ENCODE measurements at regions of chr1 and their contacts with region 1.

Region 1: GRCh38 chr1:214213136-214213535 is 67.8 kb upstream of the SMYD2 start:
- DNase-seq: no peak
- ATAC-seq: no peak
- H3K4me3 ChIP-seq: no peak overlapping the region
- H3K27ac ChIP-seq: no peak overlapping the region
- H3K4me1 ChIP-seq: peaks cover 0 to 12% (median 6%) of the 10 kb centered on the region in 12 donors
- H3K27me3 ChIP-seq: no peaks in the 10 kb centered on the region
- CTCF ChIP-seq: no peak
- POLR2A ChIP-seq: no peak

Region 2: DNA sequence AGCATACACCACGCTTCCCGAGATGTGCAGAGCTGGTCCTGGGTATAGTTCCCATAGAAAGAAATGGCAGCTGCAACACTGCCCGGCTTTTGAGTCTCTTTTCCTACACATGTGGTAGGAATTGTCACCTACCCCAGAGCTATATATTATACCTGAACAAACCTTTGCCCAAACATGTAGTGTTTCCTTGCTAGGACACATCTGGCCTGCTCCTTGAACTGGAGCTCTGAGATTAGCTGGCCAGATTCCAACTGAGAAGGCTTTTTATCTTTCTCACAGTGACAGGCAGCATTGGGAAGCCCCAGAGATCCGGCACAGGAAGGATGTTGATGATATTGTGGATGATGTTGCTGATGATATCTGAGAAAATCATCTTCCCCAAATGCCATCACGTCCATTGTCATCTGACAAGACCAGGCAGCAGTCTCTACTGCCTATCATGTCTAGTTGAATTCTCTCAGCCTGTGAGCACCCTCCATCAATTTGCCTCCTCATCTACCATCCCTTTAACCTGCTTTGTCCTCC is 47.2 kb before region 1 on chr1:
- intact Hi-C with region 1: no loop called
- DNase-seq: no peak
- ATAC-seq: no peak
- H3K4me3 ChIP-seq: no peak overlapping the region
- H3K27ac ChIP-seq: no peak overlapping the region
- H3K4me1 ChIP-seq: no peaks in the 10 kb centered on the region
- H3K27me3 ChIP-seq: peaks cover 0 to 13% (median 0%) of the 10 kb centered on the region in 9 donors
- CTCF ChIP-seq: no peak
- POLR2A ChIP-seq: no peak

Region 3: DNA sequence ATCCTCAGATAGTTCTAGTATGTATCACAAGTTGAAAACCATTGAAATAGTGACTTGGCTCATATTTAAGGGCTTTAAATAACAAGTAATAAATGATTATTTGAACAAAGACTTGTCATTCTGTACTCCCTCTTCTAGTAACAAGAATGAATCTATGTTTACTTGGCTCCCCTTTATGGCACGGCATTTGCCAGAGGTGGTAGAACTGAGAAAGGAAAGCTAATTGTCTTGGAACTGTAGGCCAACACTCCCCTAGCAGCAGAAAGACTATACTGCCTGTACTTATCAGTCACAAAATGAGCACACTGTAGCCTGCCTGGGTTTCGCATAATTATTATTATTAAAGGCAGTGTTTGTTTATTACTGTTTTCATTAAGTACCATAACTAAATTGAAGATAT is 38.2 kb after region 1 on chr1:
- intact Hi-C with region 1: loop called in 1 of 10 experiments (anchors 5 kb)
- DNase-seq: no peak
- ATAC-seq: no peak
- H3K4me3 ChIP-seq: no peak overlapping the region
- H3K27ac ChIP-seq: no peak overlapping the region
- H3K4me1 ChIP-seq: no peaks in the 10 kb centered on the region
- H3K27me3 ChIP-seq: peaks cover 0 to 7% (median 0%) of the 10 kb centered on the region in 9 donors
- CTCF ChIP-seq: no peak
- POLR2A ChIP-seq: no peak

Region 4: GRCh38 chr1:214261206-214262123 is 48.3 kb after region 1 on chr1:
- intact Hi-C with region 1: loop called in 4 of 10 experiments (anchors 2 to 5 kb)
- DNase-seq: peak; percentile 85 to 91 (median 89)
- ATAC-seq: peak; percentile 95 to 98 (median 97)
- H3K4me3 ChIP-seq: no peak overlapping the region
- H3K27ac ChIP-seq: peak overlapping the region in 10 of 12 donors; percentile 40 to 86 (median 68)
- H3K4me1 ChIP-seq: peaks cover 0 to 20% (median 5%) of the 10 kb centered on the region in 12 donors
- H3K27me3 ChIP-seq: peaks cover 0 to 56% (median 6%) of the 10 kb centered on the region in 9 donors
- CTCF ChIP-seq: peak; percentile 93 to 99 (median 97)
- POLR2A ChIP-seq: no peak

Region 5: GRCh38 chr1:214584805-214585766 is 371.9 kb after region 1 on chr1:
- intact Hi-C with region 1: loop called (anchors 5 to 10 kb)
- DNase-seq: no peak
- ATAC-seq: peak; percentile 55 to 86 (median 78)
- H3K4me3 ChIP-seq: no peak overlapping the region
- H3K27ac ChIP-seq: no peak overlapping the region
- H3K4me1 ChIP-seq: peaks cover 0 to 4% (median 0%) of the 10 kb centered on the region in 12 donors
- H3K27me3 ChIP-seq: no peaks in the 10 kb centered on the region
- CTCF ChIP-seq: peak; percentile 51 to 84 (median 74)
- POLR2A ChIP-seq: no peak

Region 6: GRCh38 chr1:214623430-214623829 is 410.3 kb after region 1 on chr1:
- intact Hi-C with region 1: loop called in 2 of 10 experiments (anchors 5 to 10 kb)
- DNase-seq: no peak
- ATAC-seq: no peak
- H3K4me3 ChIP-seq: no peak overlapping the region
- H3K27ac ChIP-seq: no peak overlapping the region
- H3K4me1 ChIP-seq: peaks cover 0 to 5% (median 0%) of the 10 kb centered on the region in 12 donors
- H3K27me3 ChIP-seq: no peaks in the 10 kb centered on the region
- CTCF ChIP-seq: no peak
- POLR2A ChIP-seq: no peak

Region 7: GRCh38 chr1:214632091-214632490 is 419.0 kb after region 1 on chr1:
- intact Hi-C with region 1: loop called in 5 of 10 experiments (anchors 5 to 10 kb)
- DNase-seq: no peak
- ATAC-seq: no peak
- H3K4me3 ChIP-seq: no peak overlapping the region
- H3K27ac ChIP-seq: no peak overlapping the region
- H3K4me1 ChIP-seq: peaks cover 0 to 5% (median 0%) of the 10 kb centered on the region in 12 donors
- H3K27me3 ChIP-seq: no peaks in the 10 kb centered on the region
- CTCF ChIP-seq: no peak
- POLR2A ChIP-seq: no peak

Region 8: DNA sequence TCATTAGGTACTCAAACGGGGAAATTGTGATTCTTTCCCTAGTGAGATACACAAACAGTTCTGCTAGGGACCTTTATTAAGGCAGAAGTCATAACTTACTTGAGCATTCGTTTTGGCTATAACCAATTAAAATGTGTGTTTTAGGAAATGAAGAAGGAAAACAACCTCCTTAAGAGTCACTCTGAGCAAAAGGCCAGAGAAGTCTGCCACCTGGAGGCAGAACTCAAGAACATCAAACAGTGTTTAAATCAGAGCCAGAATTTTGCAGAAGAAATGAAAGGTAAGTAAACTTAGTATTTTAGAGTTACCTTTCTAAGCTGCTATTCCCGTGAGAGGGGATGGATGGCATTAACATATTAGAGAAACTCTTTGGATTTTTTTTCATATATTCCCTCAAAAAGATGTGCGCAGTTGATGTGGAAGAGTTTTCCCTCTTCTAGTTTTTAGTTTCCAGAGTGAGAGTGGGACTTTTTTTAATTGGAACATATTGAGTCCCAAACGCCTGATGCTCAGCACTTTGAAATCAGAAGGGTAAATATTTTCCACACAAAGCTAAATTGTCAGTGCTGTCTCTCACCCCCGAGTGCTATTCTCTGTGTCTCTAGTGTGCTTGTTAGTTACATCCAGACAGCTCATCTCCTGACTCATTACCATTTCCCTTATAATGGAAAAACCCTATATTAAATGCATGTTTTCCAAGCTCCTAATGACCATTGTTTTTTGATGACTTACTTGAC is 424.8 kb after region 1 on chr1:
- intact Hi-C with region 1: loop called in 3 of 10 experiments (anchors 5 to 10 kb)
- DNase-seq: no peak
- ATAC-seq: no peak
- H3K4me3 ChIP-seq: no peak overlapping the region
- H3K27ac ChIP-seq: no peak overlapping the region
- H3K4me1 ChIP-seq: no peaks in the 10 kb centered on the region
- H3K27me3 ChIP-seq: no peaks in the 10 kb centered on the region
- CTCF ChIP-seq: peak; percentile 46 to 75 (median 60)
- POLR2A ChIP-seq: no peak

Region 9: DNA sequence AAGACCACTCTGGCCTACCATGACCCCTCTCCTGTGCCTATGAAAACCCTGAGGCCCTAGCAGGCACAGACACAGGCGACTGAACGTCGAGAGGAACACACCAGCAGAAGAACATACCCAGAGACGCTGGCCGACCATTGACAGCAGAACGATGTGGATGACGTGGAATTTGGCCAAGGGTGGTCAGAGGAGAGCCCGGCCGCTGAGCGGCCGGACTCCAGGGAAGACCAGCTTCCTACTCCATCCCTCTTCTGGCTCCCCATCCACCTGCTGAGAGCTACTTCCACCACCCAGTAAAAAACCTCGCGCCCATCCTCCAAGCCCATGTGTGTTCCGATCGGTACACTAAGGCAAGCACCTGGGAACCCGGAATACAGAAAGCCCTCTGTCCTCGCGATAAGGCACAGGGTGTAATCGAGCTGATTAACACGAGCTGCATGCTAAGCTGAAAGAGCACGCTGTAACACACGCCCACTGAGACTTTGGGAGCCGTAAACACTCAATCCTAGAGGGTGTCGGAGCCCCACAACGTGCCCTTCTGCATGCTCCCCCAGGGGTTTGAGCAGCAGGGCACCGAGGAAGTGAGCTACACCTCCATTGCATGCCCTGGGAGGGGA is 540.2 kb after region 1 on chr1:
- intact Hi-C with region 1: no loop called
- DNase-seq: no peak
- ATAC-seq: no peak
- H3K4me3 ChIP-seq: no peak overlapping the region
- H3K27ac ChIP-seq: no peak overlapping the region
- H3K4me1 ChIP-seq: no peaks in the 10 kb centered on the region
- H3K27me3 ChIP-seq: no peaks in the 10 kb centered on the region
- CTCF ChIP-seq: no peak
- POLR2A ChIP-seq: no peak

Measured in heart left ventricle (tissue), 16 donors.